ENCODE measurements at regions of chr1 and their contacts with region 1.

Region 1: DNA sequence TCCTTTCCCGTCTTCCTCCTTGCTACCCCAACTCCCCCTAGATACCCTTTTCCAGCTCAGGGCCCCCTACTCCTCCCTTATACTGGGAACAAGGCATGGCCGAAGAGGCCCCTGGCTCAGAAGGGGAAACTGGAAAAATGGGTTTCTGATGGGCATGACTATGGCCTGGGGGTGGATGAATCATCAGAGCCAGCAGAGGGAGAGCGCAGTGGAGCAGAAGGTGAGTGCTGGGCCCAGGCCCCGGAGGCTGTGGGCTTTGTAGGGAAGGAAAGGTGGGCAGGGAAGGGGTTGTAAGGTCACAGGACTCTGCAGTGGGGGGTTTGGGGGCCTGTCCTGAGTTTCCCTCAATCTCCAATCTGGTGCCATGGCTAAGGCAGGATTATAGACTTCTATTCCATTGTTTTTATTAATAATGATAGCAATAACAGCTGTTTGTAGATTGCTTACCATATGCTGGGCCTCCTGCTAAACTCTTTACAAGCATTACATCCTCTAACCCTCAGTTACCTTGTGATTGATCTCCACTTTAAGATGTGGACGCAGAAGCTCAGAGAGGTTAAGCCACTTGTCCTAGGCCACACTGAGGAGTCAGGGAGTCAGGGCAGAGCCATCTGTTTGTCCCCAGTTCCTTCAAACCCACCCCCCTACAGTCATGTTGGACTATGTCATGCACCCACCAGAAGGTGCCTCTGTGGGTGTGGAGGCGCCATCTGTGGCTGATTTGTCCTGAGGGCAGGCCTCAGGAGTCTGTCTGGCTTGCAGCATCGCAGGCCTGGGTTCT is 36.2 kb upstream of the ZNF362 start:
- DNase-seq: peak; percentile 86
- H3K4me3 ChIP-seq: no peak overlapping the region
- H3K27ac ChIP-seq: peak overlapping the region; percentile 84
- H3K4me1 ChIP-seq: peaks cover 39% of the 10 kb centered on the region
- H3K27me3 ChIP-seq: no peaks in the 10 kb centered on the region
- CTCF ChIP-seq: no peak

Region 2: DNA sequence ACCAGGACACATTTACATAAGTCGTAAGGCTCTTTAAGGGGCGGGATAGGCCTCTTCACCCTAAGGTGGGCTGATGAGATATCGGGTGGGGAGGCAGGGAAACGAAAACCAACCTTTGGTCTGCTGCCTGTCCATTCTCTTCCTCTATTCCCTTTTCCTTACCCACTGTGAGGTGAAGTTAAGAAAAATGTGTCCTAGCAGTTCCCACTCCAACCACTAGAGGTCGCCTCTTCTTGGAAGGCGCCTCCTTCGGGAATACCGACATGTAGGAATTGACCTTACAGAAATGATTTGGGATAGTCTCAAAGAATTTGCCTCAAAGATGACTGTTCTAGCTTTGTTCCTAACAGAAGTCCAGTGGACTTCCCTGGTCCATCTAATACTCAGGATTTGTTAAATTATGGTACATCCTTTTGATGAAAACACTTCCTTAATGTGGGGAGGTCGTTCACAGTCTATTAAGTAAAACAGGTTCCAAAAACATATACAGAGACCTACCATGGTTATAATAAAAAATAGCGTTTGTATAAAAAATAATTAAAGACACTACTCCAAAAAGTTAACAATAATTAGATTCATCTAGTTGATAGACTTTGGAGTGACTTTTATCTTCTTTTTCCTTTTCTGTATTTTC is 125.0 kb before region 1 on chr1:
- CTCF ChIA-PET with region 1: no interaction called
- dilution Hi-C with region 1: no loop called
- in situ Hi-C with region 1: no loop called
- intact Hi-C with region 1: loop called (anchors 2 kb)
- DNase-seq: peak; percentile 48
- H3K4me3 ChIP-seq: no peak overlapping the region
- H3K27ac ChIP-seq: no peak overlapping the region
- H3K4me1 ChIP-seq: peaks cover 31% of the 10 kb centered on the region
- H3K27me3 ChIP-seq: no peaks in the 10 kb centered on the region
- CTCF ChIP-seq: peak; percentile 98 to 99

Region 3: DNA sequence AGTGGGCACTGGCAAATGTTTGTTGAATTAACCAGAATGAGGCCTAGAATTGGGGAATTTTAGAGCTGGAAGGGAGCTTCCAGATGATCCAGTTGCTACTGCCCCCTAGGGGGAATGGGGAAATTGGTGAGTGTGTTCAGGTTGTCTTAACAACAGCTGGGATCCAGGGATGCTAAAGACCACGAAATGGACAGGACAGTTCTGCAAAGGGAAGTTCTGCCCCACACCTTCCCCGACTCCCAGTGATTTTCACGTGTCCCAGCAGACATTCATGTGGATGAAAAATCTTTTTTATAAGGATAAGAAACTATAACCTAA is 72.1 kb before region 1 on chr1:
- CTCF ChIA-PET with region 1: no interaction called
- dilution Hi-C with region 1: no loop called
- in situ Hi-C with region 1: no loop called
- intact Hi-C with region 1: no loop called
- DNase-seq: no peak
- H3K4me3 ChIP-seq: no peak overlapping the region
- H3K27ac ChIP-seq: no peak overlapping the region
- H3K4me1 ChIP-seq: peaks cover 13% of the 10 kb centered on the region
- H3K27me3 ChIP-seq: no peaks in the 10 kb centered on the region
- CTCF ChIP-seq: peak; percentile 46

Region 4: DNA sequence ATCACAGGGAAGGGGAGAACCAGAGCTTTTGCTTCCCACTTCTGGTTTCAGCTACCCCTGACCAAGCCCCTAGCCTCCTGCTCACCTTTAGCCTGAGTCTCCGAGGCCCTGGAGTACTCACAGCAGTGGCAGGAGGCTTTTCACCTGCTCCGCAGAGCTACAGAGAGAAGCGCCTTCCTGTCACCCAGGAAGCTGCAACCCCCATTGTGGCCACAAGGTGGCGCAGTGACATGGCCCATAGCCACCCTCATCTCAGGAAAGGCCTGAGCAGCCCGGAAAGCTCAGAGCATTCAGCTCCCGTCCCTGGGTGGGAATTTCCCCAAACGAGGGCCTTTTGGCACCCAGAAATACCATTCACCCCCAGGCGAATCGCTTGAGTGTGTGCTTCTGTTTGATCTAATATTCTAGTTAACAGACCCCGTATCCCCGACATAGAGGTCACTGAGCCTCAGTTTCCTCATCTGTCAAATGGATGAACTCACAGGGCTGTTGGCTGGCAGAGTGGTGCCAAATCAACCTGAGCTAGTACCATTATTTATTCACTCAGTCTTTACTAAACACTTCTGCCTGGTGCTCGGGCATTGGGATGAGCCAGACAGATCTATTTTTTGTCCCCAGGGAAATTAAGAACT is 75.5 kb after region 1 on chr1:
- CTCF ChIA-PET with region 1: interaction called, 6 read pairs
- dilution Hi-C with region 1: no loop called
- in situ Hi-C with region 1: no loop called
- intact Hi-C with region 1: loop called (anchors 1 kb)
- DNase-seq: peak; percentile 76
- H3K4me3 ChIP-seq: no peak overlapping the region
- H3K27ac ChIP-seq: no peak overlapping the region
- H3K4me1 ChIP-seq: no peaks in the 10 kb centered on the region
- H3K27me3 ChIP-seq: no peaks in the 10 kb centered on the region
- CTCF ChIP-seq: peak; percentile 94 to 97

Region 5: GRCh38 chr1:33367485-33368405 is 147.7 kb after region 1 on chr1:
- CTCF ChIA-PET with region 1: no interaction called
- dilution Hi-C with region 1: no loop called
- in situ Hi-C with region 1: loop called in 1 of 2 experiments (anchors 25 kb)
- intact Hi-C with region 1: loop called (anchors 1 kb)
- DNase-seq: peak; percentile 62
- H3K4me3 ChIP-seq: no peak overlapping the region
- H3K27ac ChIP-seq: no peak overlapping the region
- H3K4me1 ChIP-seq: peaks cover 34% of the 10 kb centered on the region
- H3K27me3 ChIP-seq: no peaks in the 10 kb centered on the region
- CTCF ChIP-seq: peak; percentile 94 to 99

Region 6: GRCh38 chr1:33460947-33461629 is 241.0 kb after region 1 on chr1:
- CTCF ChIA-PET with region 1: no interaction called
- dilution Hi-C with region 1: no loop called
- in situ Hi-C with region 1: loop called in 1 of 2 experiments (anchors 10 kb)
- intact Hi-C with region 1: no loop called
- DNase-seq: no peak
- H3K4me3 ChIP-seq: no peak overlapping the region
- H3K27ac ChIP-seq: no peak overlapping the region
- H3K4me1 ChIP-seq: peaks cover 29% of the 10 kb centered on the region
- H3K27me3 ChIP-seq: no peaks in the 10 kb centered on the region
- CTCF ChIP-seq: no peak

Region 7: GRCh38 chr1:33616773-33617172 is 396.7 kb after region 1 on chr1:
- CTCF ChIA-PET with region 1: no interaction called
- dilution Hi-C with region 1: no loop called
- in situ Hi-C with region 1: no loop called
- intact Hi-C with region 1: loop called (anchors 2 kb)
- DNase-seq: no peak
- H3K4me3 ChIP-seq: no peak overlapping the region
- H3K27ac ChIP-seq: no peak overlapping the region
- H3K4me1 ChIP-seq: no peaks in the 10 kb centered on the region
- H3K27me3 ChIP-seq: no peaks in the 10 kb centered on the region
- CTCF ChIP-seq: no peak